ENCODE measurements at regions of chr12 and their contacts with region 1.

Region 1: DNA sequence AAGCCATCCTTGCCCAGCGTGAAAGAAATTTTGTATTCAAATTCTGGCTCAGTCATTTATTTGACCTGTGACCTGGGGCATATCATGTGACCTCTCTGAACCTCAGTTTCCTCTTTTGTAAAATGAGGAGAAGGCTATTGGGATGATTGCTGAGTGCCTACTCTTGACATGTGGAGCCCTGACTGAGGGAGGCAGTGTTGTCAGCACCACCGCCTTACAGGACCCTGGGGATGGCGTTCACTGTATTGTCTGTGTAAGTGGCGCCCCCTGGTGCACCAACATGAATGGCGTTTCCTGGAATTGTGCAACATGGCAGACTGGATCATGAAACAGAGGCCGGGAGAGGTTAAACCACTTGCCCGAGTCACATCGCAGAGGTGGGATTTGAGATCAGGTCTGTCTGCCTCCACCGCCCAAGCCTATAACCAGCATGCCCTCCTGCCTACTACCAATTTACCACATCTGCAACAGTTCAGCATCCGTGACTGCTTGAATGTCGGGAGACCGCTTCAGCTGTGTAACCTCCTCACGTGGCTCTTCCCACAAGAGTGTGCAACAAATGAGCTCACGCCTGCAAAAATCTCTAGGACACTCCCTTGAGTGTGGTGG is 20.1 kb upstream of the CCDC63 start:
- DNase-seq: peak; percentile 72 to 82
- H3K4me3 ChIP-seq: no peak overlapping the region
- H3K4me3 Mint-ChIP-seq: no peak overlapping the region
- H3K27ac Mint-ChIP-seq: no peak overlapping the region
- H3K4me1 ChIP-seq: no peaks in the 10 kb centered on the region
- H3K4me1 Mint-ChIP-seq: no peaks in the 10 kb centered on the region
- H3K27me3 ChIP-seq: no peaks in the 10 kb centered on the region; the same call in 1 of the 2 replicates
- H3K27me3 Mint-ChIP-seq: peaks cover 6% of the 10 kb centered on the region
- CTCF ChIP-seq: peak; percentile 70 to 71

Region 2: GRCh38 chr12:110742718-110743570 is 83.8 kb before region 1 on chr12 and contains the start of gene PPP1CC:
- CTCF ChIA-PET with region 1: no interaction called
- POLR2A ChIA-PET with region 1: no interaction called
- intact Hi-C with region 1: loop called (anchors 10 kb)
- DNase-seq: peak; percentile 92 to 93
- H3K4me3 ChIP-seq: peak within 1 kb of the TSS; percentile 97
- H3K4me3 Mint-ChIP-seq: peak within 1 kb of the TSS; percentile 93
- H3K27ac Mint-ChIP-seq: peak within 1 kb of the TSS; percentile 95
- H3K4me1 ChIP-seq: peaks cover 19% of the 10 kb centered on the region; the same call in 1 of the 2 replicates
- H3K4me1 Mint-ChIP-seq: peaks cover 13% of the 10 kb centered on the region
- H3K27me3 ChIP-seq: no peaks in the 10 kb centered on the region
- H3K27me3 Mint-ChIP-seq: no peaks in the 10 kb centered on the region
- CTCF ChIP-seq: no peak
- total RNA-seq, gene PPP1CC: 202 and 213 TPM in 2 replicates

Region 3: GRCh38 chr12:110888256-110888991 is 61.7 kb after region 1 on chr12:
- CTCF ChIA-PET with region 1: interaction called, 5 read pairs
- POLR2A ChIA-PET with region 1: no interaction called
- intact Hi-C with region 1: loop called (anchors 1 kb)
- DNase-seq: no peak
- H3K4me3 ChIP-seq: no peak overlapping the region
- H3K4me3 Mint-ChIP-seq: peak overlapping the region; percentile 77
- H3K27ac Mint-ChIP-seq: peak overlapping the region; percentile 64
- H3K4me1 ChIP-seq: no peaks in the 10 kb centered on the region
- H3K4me1 Mint-ChIP-seq: no peaks in the 10 kb centered on the region
- H3K27me3 ChIP-seq: no peaks in the 10 kb centered on the region
- H3K27me3 Mint-ChIP-seq: peaks cover 10% of the 10 kb centered on the region
- CTCF ChIP-seq: no peak

Measured in Caco-2 (cell line).